ENCODE measurements at regions of chr3 and their contacts with region 1.

Region 1: GRCh38 chr3:179604321-179605078 is at the starts of genes MRPL47 and NDUFB5:
- DNase-seq: peak; percentile 81 to 98 (median 93)
- ATAC-seq: peak; percentile 99
- H3K4me3 ChIP-seq: peak within 1 kb of the TSS; percentile 82 to 96
- H3K4me3 Mint-ChIP-seq: peak within 1 kb of the TSS; percentile 97
- H3K27ac ChIP-seq: peak within 1 kb of the TSS; percentile 93 to 98
- H3K27ac Mint-ChIP-seq: peak within 1 kb of the TSS; percentile 100
- H3K4me1 ChIP-seq: peaks cover 13% of the 10 kb centered on the region
- H3K4me1 Mint-ChIP-seq: peaks cover 55% of the 10 kb centered on the region
- H3K27me3 ChIP-seq: no peaks in the 10 kb centered on the region
- H3K27me3 Mint-ChIP-seq: no peaks in the 10 kb centered on the region
- CTCF ChIP-seq: no peak
- total RNA-seq, gene MRPL47: 36.4 to 37.8 TPM
- total RNA-seq, gene NDUFB5: 21.0 to 25.6 TPM

Region 2: DNA sequence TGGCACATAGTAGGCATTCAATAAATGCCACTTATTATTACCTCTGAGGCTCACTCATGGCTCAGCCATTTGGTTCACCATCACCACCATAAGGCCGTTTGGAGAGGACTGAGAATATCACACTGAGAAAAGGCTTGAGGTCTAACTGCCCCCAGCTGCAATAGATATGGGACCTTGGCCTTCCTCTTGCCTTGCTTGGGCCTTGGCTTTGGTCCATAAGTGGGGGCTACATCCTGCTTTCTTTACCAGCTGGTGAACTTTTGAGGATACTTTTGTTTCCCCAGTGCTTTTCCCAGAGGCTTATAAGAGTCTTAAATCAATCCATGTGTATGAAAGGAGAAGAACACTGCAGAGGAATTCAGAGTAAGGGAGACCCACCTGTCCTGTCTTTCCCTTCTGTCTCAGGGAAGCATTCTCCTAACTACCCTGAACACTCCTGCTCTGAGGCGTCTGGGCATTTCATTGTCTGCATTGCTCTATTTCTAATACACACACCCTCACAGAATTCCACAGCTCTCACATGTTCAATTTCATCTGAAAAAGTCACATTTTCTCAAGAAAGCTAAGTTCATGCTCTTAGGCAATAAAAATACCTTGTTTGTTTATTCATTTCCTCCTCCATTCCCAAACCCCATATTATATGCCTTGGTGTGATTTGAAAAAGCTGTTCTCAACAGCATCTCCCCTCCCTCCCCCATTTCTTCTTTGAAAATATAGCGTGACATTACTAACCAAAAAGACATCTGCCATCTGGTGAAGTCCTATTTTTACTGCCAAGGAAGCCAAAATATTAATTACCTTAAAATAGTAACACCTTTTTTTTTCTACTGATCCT is 1090.7 kb before region 1 on chr3:
- CTCF ChIA-PET with region 1: no interaction called
- POLR2A ChIA-PET with region 1: no interaction called
- intact Hi-C with region 1: no loop called
- DNase-seq: no peak
- ATAC-seq: no peak
- H3K4me3 ChIP-seq: no peak overlapping the region
- H3K4me3 Mint-ChIP-seq: no peak overlapping the region
- H3K27ac ChIP-seq: no peak overlapping the region
- H3K27ac Mint-ChIP-seq: no peak overlapping the region
- H3K4me1 ChIP-seq: no peaks in the 10 kb centered on the region
- H3K4me1 Mint-ChIP-seq: no peaks in the 10 kb centered on the region
- H3K27me3 ChIP-seq: no peaks in the 10 kb centered on the region
- H3K27me3 Mint-ChIP-seq: peaks cover 1% of the 10 kb centered on the region
- CTCF ChIP-seq: no peak

Region 3: GRCh38 chr3:179071550-179072397 is 532.7 kb before region 1 on chr3 and contains the start of gene ZMAT3:
- CTCF ChIA-PET with region 1: no interaction called
- POLR2A ChIA-PET with region 1: interaction called, 3 read pairs
- intact Hi-C with region 1: loop called in 1 of 2 experiments (anchors 5 kb)
- DNase-seq: peak; percentile 65 to 92 (median 85)
- ATAC-seq: peak; percentile 81
- H3K4me3 ChIP-seq: peak within 1 kb of the TSS; percentile 76 to 88
- H3K4me3 Mint-ChIP-seq: peak within 1 kb of the TSS; percentile 98
- H3K27ac ChIP-seq: peak within 1 kb of the TSS; percentile 80 to 83
- H3K27ac Mint-ChIP-seq: peak within 1 kb of the TSS; percentile 93
- H3K4me1 ChIP-seq: peaks cover 17% of the 10 kb centered on the region
- H3K4me1 Mint-ChIP-seq: peaks cover 61% of the 10 kb centered on the region
- H3K27me3 ChIP-seq: no peaks in the 10 kb centered on the region
- H3K27me3 Mint-ChIP-seq: no peaks in the 10 kb centered on the region
- CTCF ChIP-seq: no peak
- total RNA-seq, gene ZMAT3: 8.7 to 9.4 TPM

Region 4: GRCh38 chr3:179347345-179348194 is 256.9 kb before region 1 on chr3 and contains the start of gene MFN1:
- CTCF ChIA-PET with region 1: no interaction called
- POLR2A ChIA-PET with region 1: no interaction called
- intact Hi-C with region 1: loop called (anchors 1 to 2 kb)
- DNase-seq: peak; percentile 72 to 95 (median 88)
- ATAC-seq: peak; percentile 97
- H3K4me3 ChIP-seq: peak within 1 kb of the TSS; percentile 89 to 94
- H3K4me3 Mint-ChIP-seq: peak within 1 kb of the TSS; percentile 100
- H3K27ac ChIP-seq: peak within 1 kb of the TSS; percentile 68 to 77
- H3K27ac Mint-ChIP-seq: peak within 1 kb of the TSS; percentile 99
- H3K4me1 ChIP-seq: peaks cover 6% of the 10 kb centered on the region
- H3K4me1 Mint-ChIP-seq: peaks cover 35% of the 10 kb centered on the region
- H3K27me3 ChIP-seq: no peaks in the 10 kb centered on the region
- H3K27me3 Mint-ChIP-seq: no peaks in the 10 kb centered on the region
- CTCF ChIP-seq: no peak
- total RNA-seq, gene MFN1: 21.9 to 26.7 TPM

Region 5: DNA sequence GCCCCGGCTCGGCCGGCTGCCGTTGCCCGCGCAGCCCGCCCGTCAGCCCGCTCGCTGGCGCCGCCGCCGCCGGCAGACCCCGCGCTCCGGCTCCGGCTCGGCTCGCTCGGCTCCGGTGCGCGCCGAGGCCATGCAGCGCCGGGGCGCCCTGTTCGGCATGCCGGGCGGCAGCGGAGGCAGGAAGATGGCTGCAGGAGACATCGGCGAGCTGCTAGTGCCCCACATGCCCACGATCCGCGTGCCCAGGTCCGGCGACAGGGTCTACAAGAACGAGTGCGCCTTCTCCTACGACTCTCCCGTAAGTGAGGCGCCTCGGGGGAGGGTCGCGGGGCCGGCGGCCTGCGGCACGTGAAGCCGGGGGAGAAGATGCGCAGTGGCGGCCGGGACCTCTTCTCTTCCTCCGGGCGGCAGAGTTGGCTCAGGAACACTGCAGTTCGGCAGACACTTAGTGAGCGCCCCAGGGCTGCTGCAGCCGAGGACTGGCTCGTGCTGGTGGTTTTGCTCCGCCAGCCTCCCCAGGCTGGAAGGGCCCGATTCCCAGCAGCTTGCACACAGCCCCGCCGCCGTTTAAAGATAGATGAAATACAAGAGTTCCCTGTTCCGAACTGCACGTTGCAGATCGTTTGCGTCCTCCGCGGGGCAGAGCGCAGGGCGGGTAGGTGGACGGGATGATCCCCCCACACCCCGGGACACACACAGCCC is 48.7 kb after region 1 on chr3:
- CTCF ChIA-PET with region 1: interaction called, 8 read pairs
- POLR2A ChIA-PET with region 1: interaction called, 4 read pairs
- intact Hi-C with region 1: loop called (anchors 1 to 2 kb)
- DNase-seq: peak; percentile 15 to 79 (median 64)
- ATAC-seq: peak; percentile 62
- H3K4me3 ChIP-seq: peak overlapping the region; percentile 78 to 93
- H3K4me3 Mint-ChIP-seq: peak overlapping the region; percentile 92
- H3K27ac ChIP-seq: peak overlapping the region; percentile 67 to 69
- H3K27ac Mint-ChIP-seq: peak overlapping the region; percentile 90
- H3K4me1 ChIP-seq: peaks cover 6% of the 10 kb centered on the region
- H3K4me1 Mint-ChIP-seq: peaks cover 31% of the 10 kb centered on the region
- H3K27me3 ChIP-seq: no peaks in the 10 kb centered on the region
- H3K27me3 Mint-ChIP-seq: no peaks in the 10 kb centered on the region
- CTCF ChIP-seq: no peak

Region 6: GRCh38 chr3:180989291-180990163 is 1385.0 kb after region 1 on chr3 and contains the start of gene DNAJC19:
- CTCF ChIA-PET with region 1: no interaction called
- POLR2A ChIA-PET with region 1: no interaction called
- intact Hi-C with region 1: loop called in 1 of 2 experiments (anchors 2 kb)
- DNase-seq: peak; percentile 82 to 97 (median 90)
- ATAC-seq: peak; percentile 95
- H3K4me3 ChIP-seq: peak within 1 kb of the TSS; percentile 74 to 93
- H3K4me3 Mint-ChIP-seq: peak within 1 kb of the TSS; percentile 97
- H3K27ac ChIP-seq: peak within 1 kb of the TSS; percentile 74
- H3K27ac Mint-ChIP-seq: peak within 1 kb of the TSS; percentile 97
- H3K4me1 ChIP-seq: peaks cover 11% of the 10 kb centered on the region
- H3K4me1 Mint-ChIP-seq: peaks cover 51% of the 10 kb centered on the region
- H3K27me3 ChIP-seq: no peaks in the 10 kb centered on the region
- H3K27me3 Mint-ChIP-seq: peaks cover 3% of the 10 kb centered on the region
- CTCF ChIP-seq: no peak
- total RNA-seq, gene DNAJC19: 35.5 to 42.3 TPM

Measured in CD8-positive, alpha-beta T cell (primary cell).